Aorta (tissue), 5 donors: ENCODE measurements at regions of chr4 and their contacts with region 1.

Region 1: GRCh38 chr4:122602277-122603142 is 18.4 kb downstream of the IL21 start:
- DNase-seq: no peak
- ATAC-seq: no peak
- H3K4me3 ChIP-seq: no peak overlapping the region
- H3K27ac ChIP-seq: no peak overlapping the region
- H3K4me1 ChIP-seq: no peaks in the 10 kb centered on the region
- H3K27me3 ChIP-seq: no peaks in the 10 kb centered on the region

Region 2: GRCh38 chr4:122716825-122717448 is 114.4 kb after region 1 on chr4:
- intact Hi-C with region 1: loop called in 1 of 2 experiments (anchors 5 kb)
- DNase-seq: peak; percentile 76 to 83
- ATAC-seq: no peak
- H3K4me3 ChIP-seq: no peak overlapping the region
- H3K27ac ChIP-seq: no peak overlapping the region
- H3K4me1 ChIP-seq: no peaks in the 10 kb centered on the region
- H3K27me3 ChIP-seq: no peaks in the 10 kb centered on the region

Region 3: GRCh38 chr4:122930862-122931261 is 328.4 kb after region 1 on chr4:
- intact Hi-C with region 1: loop called (anchors 5 kb)
- DNase-seq: no peak
- ATAC-seq: no peak
- H3K4me3 ChIP-seq: no peak overlapping the region
- H3K27ac ChIP-seq: no peak overlapping the region
- H3K4me1 ChIP-seq: no peaks in the 10 kb centered on the region
- H3K27me3 ChIP-seq: no peaks in the 10 kb centered on the region